SK-N-SH (cell line): ENCODE measurements at regions of chr7 and their contacts with region 1.

Region 1: GRCh38 chr7:100889761-100890634 is 483 bp upstream of the UFSP1 start:
- DNase-seq: peak; percentile 100
- H3K4me3 ChIP-seq: peak overlapping the region; percentile 71 to 78
- H3K27ac ChIP-seq: peak overlapping the region; percentile 82 to 97
- H3K4me1 ChIP-seq: peaks cover 7 to 40% of the 10 kb centered on the region in 2 experiments
- H3K27me3 ChIP-seq: 0 out of 2 replicates have a peak, but pooled peaks cover under 1% of the 10 kb centered on the region
- CTCF ChIP-seq: no peak
- EP300 ChIP-seq: no peak
- RAD21 ChIP-seq: no peak

Region 2: DNA sequence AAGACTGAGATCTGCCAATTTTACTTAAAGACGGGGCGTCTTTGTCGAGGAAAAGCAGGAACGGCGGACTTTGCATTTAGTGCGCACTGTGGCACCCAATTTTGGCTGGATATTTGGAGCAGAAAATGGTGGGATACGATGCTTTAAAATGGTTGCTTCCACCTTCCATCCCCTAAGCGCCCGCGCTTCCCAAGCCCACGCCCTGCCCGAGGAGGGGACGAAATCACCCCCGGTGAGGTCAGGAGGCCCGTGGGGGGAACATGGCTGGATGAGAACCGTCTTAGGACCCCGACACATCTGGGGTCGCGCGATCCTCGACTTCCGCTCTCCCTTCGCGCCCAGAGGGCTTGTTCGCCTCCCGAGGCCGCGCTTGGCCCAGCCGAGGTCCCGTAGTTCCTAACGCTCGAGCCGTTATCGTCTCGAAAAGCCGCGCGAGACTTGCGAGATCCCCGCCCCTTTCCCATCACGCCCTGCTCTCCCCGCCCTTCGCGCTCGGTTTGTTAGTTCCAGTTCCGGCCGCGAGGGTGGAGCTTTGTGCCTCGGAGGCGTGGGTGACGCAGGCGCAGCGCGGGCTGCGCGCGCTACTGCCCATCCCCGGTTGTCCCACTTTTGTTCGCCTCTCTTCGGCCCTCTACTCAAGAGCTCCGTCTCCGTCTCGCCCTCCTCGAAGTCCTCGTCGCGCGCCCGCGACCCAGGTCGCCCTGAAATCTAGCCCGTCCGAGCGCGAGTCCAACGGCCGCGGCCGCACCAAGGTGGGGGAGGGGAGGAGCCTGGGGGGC is 15.2 kb before region 1 on chr7 and contains the start of gene SRRT:
- CTCF ChIA-PET with region 1: interaction called, 18 read pairs
- POLR2A ChIA-PET with region 1: interaction called, 126 read pairs
- DNase-seq: peak; percentile 100
- H3K4me3 ChIP-seq: peak within 1 kb of the TSS; percentile 65 to 93
- H3K27ac ChIP-seq: peak within 1 kb of the TSS; percentile 92 to 95
- H3K4me1 ChIP-seq: peaks cover 13 to 23% of the 10 kb centered on the region in 2 experiments; a peak in 3 of 4 replicates
- H3K27me3 ChIP-seq: no peaks in the 10 kb centered on the region
- CTCF ChIP-seq: no peak
- EP300 ChIP-seq: peak; percentile 24 to 38; a peak in 2 of 4 replicates
- RAD21 ChIP-seq: no peak
- polyA plus RNA-seq, gene SRRT: 76.5 and 92.7 TPM in 2 replicates

Region 3: DNA sequence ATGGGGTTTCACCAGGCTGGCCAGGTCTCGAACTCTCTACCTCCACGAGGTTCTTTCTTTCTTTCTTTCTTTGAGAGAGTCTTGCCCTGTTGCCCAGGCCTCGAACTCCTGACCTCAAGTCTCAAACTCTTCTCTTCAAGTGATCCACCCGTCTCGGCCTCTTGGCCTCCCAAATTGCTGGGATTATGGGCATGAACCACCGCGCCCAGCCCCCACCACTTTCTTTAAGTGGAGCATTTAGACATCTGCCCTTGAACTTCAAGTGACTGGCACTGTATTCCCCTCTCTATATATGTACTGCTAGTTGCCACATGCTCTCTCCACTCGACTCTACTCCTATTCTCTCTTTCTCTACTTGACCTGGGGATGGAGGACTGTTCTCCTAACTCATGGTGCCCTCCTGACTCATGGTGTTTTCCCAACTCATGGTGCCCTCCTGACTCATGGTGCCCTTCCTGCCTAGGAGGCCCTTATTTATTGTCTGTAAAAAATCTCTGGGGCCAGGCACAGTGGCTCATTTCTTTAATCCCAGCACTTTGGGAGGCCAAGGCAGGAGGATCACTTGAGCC is 25.0 kb after region 1 on chr7:
- CTCF ChIA-PET with region 1: interaction called, 19 read pairs
- POLR2A ChIA-PET with region 1: no interaction called
- DNase-seq: no peak
- H3K4me3 ChIP-seq: no peak overlapping the region
- H3K27ac ChIP-seq: no peak overlapping the region
- H3K4me1 ChIP-seq: no peaks in the 10 kb centered on the region
- H3K27me3 ChIP-seq: peaks cover 36% of the 10 kb centered on the region; the same call in 1 of the 2 replicates
- CTCF ChIP-seq: no peak
- EP300 ChIP-seq: no peak
- RAD21 ChIP-seq: no peak

Region 4: DNA sequence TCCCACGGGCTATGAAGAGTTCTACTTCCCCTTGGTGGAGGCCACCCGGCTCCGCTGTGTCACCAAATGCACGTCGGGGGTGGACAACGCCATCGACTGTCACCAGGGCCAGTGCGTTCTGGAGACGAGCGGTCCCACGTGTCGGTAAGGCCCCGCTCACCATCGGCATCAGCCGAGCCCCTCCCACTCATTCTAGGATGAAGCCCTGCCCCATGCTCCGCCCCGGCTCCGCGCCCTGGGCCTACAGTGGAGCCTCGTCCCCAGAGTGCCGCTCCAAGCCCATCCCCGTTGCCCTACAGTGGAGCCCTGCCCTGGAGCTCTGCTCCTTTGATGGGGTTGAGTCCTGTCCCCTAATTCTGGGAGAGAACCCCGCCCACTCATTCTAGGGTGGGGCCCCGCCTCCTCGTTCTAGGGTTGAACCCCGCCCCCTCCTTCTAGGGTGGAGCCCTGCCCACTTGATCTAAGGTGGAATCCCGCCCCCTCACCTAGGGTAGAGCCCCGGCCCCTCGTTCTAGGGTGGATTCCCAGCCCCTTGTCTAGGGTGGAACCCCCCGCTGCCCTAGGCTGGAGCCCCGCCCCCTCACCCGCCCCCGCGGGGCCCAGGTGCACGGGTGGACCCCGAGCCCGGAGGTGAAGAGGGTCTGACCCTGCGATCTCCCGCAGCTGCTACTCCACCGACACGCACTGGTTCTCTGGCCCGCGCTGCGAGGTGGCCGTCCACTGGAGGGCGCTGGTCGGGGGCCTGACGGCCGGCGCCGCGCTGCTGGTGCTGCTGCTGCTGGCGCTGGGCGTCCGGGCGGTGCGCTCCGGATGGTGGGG is 75.9 kb after region 1 on chr7:
- CTCF ChIA-PET with region 1: interaction called, 12 read pairs
- POLR2A ChIA-PET with region 1: no interaction called
- DNase-seq: peak; percentile 99
- H3K4me3 ChIP-seq: peak overlapping the region; percentile 23 to 54; a peak in 3 of 4 replicates
- H3K27ac ChIP-seq: no peak overlapping the region
- H3K4me1 ChIP-seq: peaks cover 0 to 7% of the 10 kb centered on the region in 2 experiments; a peak in 1 of 4 replicates
- H3K27me3 ChIP-seq: peaks cover 96% of the 10 kb centered on the region
- CTCF ChIP-seq: peak; percentile 89
- EP300 ChIP-seq: no peak
- RAD21 ChIP-seq: peak; percentile 65

Region 5: GRCh38 chr7:101066141-101066832 is 176.3 kb after region 1 on chr7:
- CTCF ChIA-PET with region 1: interaction called, 19 read pairs
- POLR2A ChIA-PET with region 1: no interaction called
- DNase-seq: no peak
- H3K4me3 ChIP-seq: no peak overlapping the region
- H3K27ac ChIP-seq: no peak overlapping the region
- H3K4me1 ChIP-seq: no peaks in the 10 kb centered on the region
- H3K27me3 ChIP-seq: peaks cover 66% of the 10 kb centered on the region
- CTCF ChIP-seq: no peak
- EP300 ChIP-seq: no peak
- RAD21 ChIP-seq: no peak

Region 6: GRCh38 chr7:101094416-101095375 is 204.7 kb after region 1 on chr7:
- CTCF ChIA-PET with region 1: interaction called, 11 read pairs
- POLR2A ChIA-PET with region 1: no interaction called
- DNase-seq: peak; percentile 80
- H3K4me3 ChIP-seq: peak overlapping the region in 1 of 2 experiments; percentile 9; a peak in 1 of 4 replicates
- H3K27ac ChIP-seq: peak overlapping the region; percentile 18 to 93; a peak in 3 of 4 replicates
- H3K4me1 ChIP-seq: peaks cover 2 to 24% of the 10 kb centered on the region in 2 experiments; a peak in 3 of 4 replicates
- H3K27me3 ChIP-seq: no peaks in the 10 kb centered on the region
- CTCF ChIP-seq: peak; percentile 99
- EP300 ChIP-seq: no peak
- RAD21 ChIP-seq: peak; percentile 76